Mammary epithelial cell (primary cell): ENCODE measurements at regions of chr9 and their contacts with region 1.

Region 1: GRCh38 chr9:134475011-134475790 is 148.9 kb downstream of the RXRA start:
- DNase-seq: no peak
- H3K4me3 ChIP-seq: no peak overlapping the region
- H3K27ac ChIP-seq: no peak overlapping the region
- H3K4me1 ChIP-seq: no peaks in the 10 kb centered on the region
- H3K27me3 ChIP-seq: no peaks in the 10 kb centered on the region
- CTCF ChIP-seq: no peak

Region 2: GRCh38 chr9:134381671-134382516 is 93.3 kb before region 1 on chr9:
- CTCF ChIA-PET with region 1: no interaction called
- dilution Hi-C with region 1: loop called (anchors 5 kb)
- in situ Hi-C with region 1: no loop called
- intact Hi-C with region 1: no loop called
- DNase-seq: no peak
- H3K4me3 ChIP-seq: no peak overlapping the region
- H3K27ac ChIP-seq: no peak overlapping the region
- H3K4me1 ChIP-seq: peaks cover 74% of the 10 kb centered on the region
- H3K27me3 ChIP-seq: no peaks in the 10 kb centered on the region
- CTCF ChIP-seq: peak in 1 of 2 donors; percentile 11

Region 3: GRCh38 chr9:134585746-134586706 is 110.8 kb after region 1 on chr9:
- CTCF ChIA-PET with region 1: no interaction called
- dilution Hi-C with region 1: loop called (anchors 5 kb)
- in situ Hi-C with region 1: no loop called
- intact Hi-C with region 1: no loop called
- DNase-seq: peak; percentile 6
- H3K4me3 ChIP-seq: no peak overlapping the region
- H3K27ac ChIP-seq: no peak overlapping the region
- H3K4me1 ChIP-seq: no peaks in the 10 kb centered on the region
- H3K27me3 ChIP-seq: no peaks in the 10 kb centered on the region
- CTCF ChIP-seq: no peak

Region 4: GRCh38 chr9:134641173-134641985 is 166.2 kb after region 1 on chr9 and contains the start of gene COL5A1:
- CTCF ChIA-PET with region 1: no interaction called
- dilution Hi-C with region 1: loop called (anchors 5 kb)
- in situ Hi-C with region 1: no loop called
- intact Hi-C with region 1: no loop called
- DNase-seq: peak; percentile 86
- H3K4me3 ChIP-seq: peak within 1 kb of the TSS in 2 of 3 experiments; percentile 30 to 32
- H3K27ac ChIP-seq: no peak within 1 kb of the TSS
- H3K4me1 ChIP-seq: peaks cover 5% of the 10 kb centered on the region
- H3K27me3 ChIP-seq: peaks cover 4% of the 10 kb centered on the region
- CTCF ChIP-seq: no peak
- total RNA-seq, gene COL5A1: 7.2 to 22.8 TPM

Region 5: GRCh38 chr9:134738869-134739659 is 263.9 kb after region 1 on chr9:
- CTCF ChIA-PET with region 1: no interaction called
- dilution Hi-C with region 1: loop called (anchors 5 kb)
- in situ Hi-C with region 1: no loop called
- intact Hi-C with region 1: no loop called
- DNase-seq: peak; percentile 23
- H3K4me3 ChIP-seq: no peak overlapping the region
- H3K27ac ChIP-seq: no peak overlapping the region
- H3K4me1 ChIP-seq: no peaks in the 10 kb centered on the region
- H3K27me3 ChIP-seq: no peaks in the 10 kb centered on the region
- CTCF ChIP-seq: peak; percentile 26 to 60

Region 6: GRCh38 chr9:135410831-135411473 is 935.8 kb after region 1 on chr9:
- CTCF ChIA-PET with region 1: no interaction called
- dilution Hi-C with region 1: loop called (anchors 10 kb)
- in situ Hi-C with region 1: no loop called
- intact Hi-C with region 1: no loop called
- DNase-seq: no peak
- H3K4me3 ChIP-seq: no peak overlapping the region
- H3K27ac ChIP-seq: no peak overlapping the region
- H3K4me1 ChIP-seq: no peaks in the 10 kb centered on the region
- H3K27me3 ChIP-seq: no peaks in the 10 kb centered on the region
- CTCF ChIP-seq: no peak

Region 7: GRCh38 chr9:135440620-135441019 is 965.4 kb after region 1 on chr9:
- CTCF ChIA-PET with region 1: no interaction called
- dilution Hi-C with region 1: loop called (anchors 10 kb)
- in situ Hi-C with region 1: no loop called
- intact Hi-C with region 1: no loop called
- DNase-seq: no peak
- H3K4me3 ChIP-seq: no peak overlapping the region
- H3K27ac ChIP-seq: no peak overlapping the region
- H3K4me1 ChIP-seq: no peaks in the 10 kb centered on the region
- H3K27me3 ChIP-seq: no peaks in the 10 kb centered on the region
- CTCF ChIP-seq: peak; percentile 45 to 61